Ascending aorta (tissue), 2 donors: ENCODE measurements at regions of chr11 and their contacts with region 1.

Region 1: DNA sequence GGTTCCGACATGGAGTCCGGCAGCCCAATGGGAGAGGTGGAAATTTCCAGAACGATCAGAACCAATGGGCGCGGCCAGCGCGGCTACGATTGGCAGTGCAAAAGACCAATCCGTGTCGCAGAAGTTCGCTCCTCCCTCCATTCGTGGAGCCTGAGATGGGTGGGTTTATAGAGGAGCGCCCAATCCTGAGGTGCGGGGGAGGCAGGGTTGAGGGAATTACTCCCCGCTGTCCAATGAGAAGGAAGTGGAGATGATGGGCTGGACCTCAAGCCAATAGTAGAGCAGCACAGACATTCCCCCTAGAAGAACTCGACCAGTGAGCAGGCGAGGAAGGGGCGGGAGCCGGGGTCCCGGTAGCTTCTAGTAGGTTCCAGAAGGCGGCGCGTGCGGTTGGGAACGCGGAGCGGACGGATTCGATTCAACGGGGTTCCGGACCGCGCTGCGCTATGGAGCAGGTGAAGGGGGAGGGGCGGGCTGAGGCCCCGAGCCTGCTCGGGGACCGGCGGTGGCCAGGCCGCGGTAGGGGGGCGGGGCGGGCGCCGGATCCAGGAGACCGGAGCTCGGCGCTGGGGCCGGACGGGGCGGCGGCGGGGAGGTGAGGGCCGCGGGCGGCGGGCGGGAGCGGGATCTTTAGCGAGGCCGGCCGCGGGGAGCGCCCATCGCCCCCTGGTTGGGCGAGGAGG is at the start of gene STIP1:
- DNase-seq: peak; percentile 99 to 100
- H3K4me3 ChIP-seq: peak within 1 kb of the TSS; percentile 61 to 69
- H3K27ac ChIP-seq: peak within 1 kb of the TSS; percentile 92
- H3K4me1 ChIP-seq: peaks cover 5 to 34% of the 10 kb centered on the region in 2 donors
- H3K27me3 ChIP-seq: no peaks in the 10 kb centered on the region
- CTCF ChIP-seq: peak; percentile 10 to 31 (median 28)
- total RNA-seq, gene STIP1: 77.7 TPM

Region 2: GRCh38 chr11:64164392-64165312 is 21.3 kb before region 1 on chr11:
- intact Hi-C with region 1: loop called (anchors 1 kb)
- DNase-seq: no peak
- H3K4me3 ChIP-seq: peak overlapping the region; percentile 82 to 92
- H3K27ac ChIP-seq: peak overlapping the region; percentile 44 to 65
- H3K4me1 ChIP-seq: peaks cover 9 to 12% of the 10 kb centered on the region in 2 donors
- H3K27me3 ChIP-seq: no peaks in the 10 kb centered on the region
- CTCF ChIP-seq: no peak

Region 3: GRCh38 chr11:64225612-64226506 is 39.9 kb after region 1 on chr11 and contains the starts of genes NUDT22 and TRPT1:
- intact Hi-C with region 1: loop called (anchors 1 kb)
- DNase-seq: peak; percentile 61 to 96
- H3K4me3 ChIP-seq: peak within 1 kb of the TSS; percentile 61 to 77
- H3K27ac ChIP-seq: peak within 1 kb of the TSS; percentile 88 to 89
- H3K4me1 ChIP-seq: peaks cover 7 to 32% of the 10 kb centered on the region in 2 donors
- H3K27me3 ChIP-seq: no peaks in the 10 kb centered on the region
- CTCF ChIP-seq: peak in 2 of 3 experiments; percentile 11 to 15
- total RNA-seq, gene NUDT22: 158 TPM
- total RNA-seq, gene TRPT1: 224 TPM

Region 4: GRCh38 chr11:64358907-64359711 is 173.2 kb after region 1 on chr11 and contains the start of gene RPS6KA4:
- intact Hi-C with region 1: no loop called
- DNase-seq: peak in 1 of 2 donors; percentile 83
- H3K4me3 ChIP-seq: peak within 1 kb of the TSS; percentile 75 to 95
- H3K27ac ChIP-seq: peak within 1 kb of the TSS; percentile 84 to 88
- H3K4me1 ChIP-seq: peaks cover 20 to 32% of the 10 kb centered on the region in 2 donors
- H3K27me3 ChIP-seq: no peaks in the 10 kb centered on the region
- CTCF ChIP-seq: peak in 1 of 3 experiments; percentile 16
- total RNA-seq, gene RPS6KA4: 81.5 TPM